ENCODE measurements at regions of chr15 and their contacts with region 1.

Region 1: DNA sequence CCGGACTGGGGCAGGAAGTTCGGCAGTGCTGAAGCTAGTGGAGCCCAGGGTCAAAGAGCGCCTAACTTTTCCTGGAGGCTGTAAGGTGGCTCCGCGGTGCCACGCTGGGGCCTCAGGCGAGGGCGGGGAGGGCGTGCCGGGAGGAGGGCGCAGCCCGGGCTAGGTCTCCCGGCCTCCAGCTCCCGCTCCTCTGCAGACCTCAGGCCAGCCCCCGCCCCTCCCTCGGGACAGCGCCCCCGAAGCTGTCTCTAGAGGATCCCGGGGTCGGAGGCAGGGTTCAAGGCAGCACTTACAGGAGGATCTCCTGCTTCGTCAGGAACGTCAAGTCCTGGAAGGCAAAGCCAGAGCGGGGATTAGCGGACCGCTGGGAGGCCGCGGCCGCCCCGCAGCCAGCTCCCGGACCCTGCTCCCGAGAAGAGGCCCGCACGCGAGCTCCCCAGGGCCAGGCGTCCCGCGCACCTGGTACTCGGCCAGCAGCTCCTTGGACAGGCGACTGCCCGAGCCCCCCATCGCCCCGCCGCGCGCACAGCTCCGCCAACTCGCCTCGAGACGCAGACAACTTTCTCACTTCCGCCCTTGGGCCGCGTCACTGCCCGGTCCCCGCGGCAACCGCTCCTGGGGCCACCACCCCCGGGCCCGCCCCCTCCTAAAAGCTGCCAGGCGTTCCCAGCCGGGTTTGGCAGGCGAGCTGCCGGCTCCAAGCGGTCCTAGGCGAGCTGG is at the start of gene CIB1:
- DNase-seq: peak; percentile 97
- ATAC-seq: peak; percentile 87
- H3K4me3 Mint-ChIP-seq: peak within 1 kb of the TSS; percentile 99
- H3K27ac Mint-ChIP-seq: peak within 1 kb of the TSS; percentile 94
- H3K4me1 Mint-ChIP-seq: peaks cover 45% of the 10 kb centered on the region
- H3K27me3 Mint-ChIP-seq: no peaks in the 10 kb centered on the region
- CTCF ChIP-seq: no peak
- total RNA-seq, gene CIB1: 151 to 154 TPM

Region 2: DNA sequence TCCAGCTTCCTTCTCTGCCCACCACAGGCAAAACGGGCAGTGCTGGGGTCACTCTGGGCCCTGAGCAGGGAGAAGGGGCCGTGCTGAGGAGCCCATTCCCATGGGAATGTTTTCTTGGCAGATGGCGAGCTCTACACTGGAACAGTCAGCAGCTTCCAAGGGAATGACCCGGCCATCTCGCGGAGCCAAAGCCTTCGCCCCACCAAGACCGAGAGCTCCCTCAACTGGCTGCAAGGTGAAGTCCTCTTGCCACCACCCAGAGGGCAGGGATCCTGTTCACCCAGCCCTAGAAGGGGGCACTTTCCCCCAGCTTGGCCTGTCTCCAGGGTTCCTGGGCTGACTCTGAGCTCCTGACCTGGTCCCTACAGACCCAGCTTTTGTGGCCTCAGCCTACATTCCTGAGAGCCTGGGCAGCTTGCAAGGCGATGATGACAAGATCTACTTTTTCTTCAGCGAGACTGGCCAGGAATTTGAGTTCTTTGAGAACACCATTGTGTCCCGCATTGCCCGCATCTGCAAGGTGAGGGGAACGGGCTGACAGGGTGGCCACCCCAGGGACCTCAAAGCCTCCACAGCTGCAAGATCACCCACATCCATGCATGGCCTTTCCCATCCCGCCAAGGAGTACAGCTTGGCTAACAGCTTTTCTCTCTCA is 12.2 kb before region 1 on chr15:
- CTCF ChIA-PET with region 1: interaction called, 24 read pairs
- POLR2A ChIA-PET with region 1: interaction called, 3 read pairs
- intact Hi-C with region 1: no loop called
- DNase-seq: peak; percentile 47
- ATAC-seq: peak; percentile 61
- H3K4me3 Mint-ChIP-seq: no peak overlapping the region
- H3K27ac Mint-ChIP-seq: no peak overlapping the region
- H3K4me1 Mint-ChIP-seq: peaks cover 8% of the 10 kb centered on the region
- H3K27me3 Mint-ChIP-seq: no peaks in the 10 kb centered on the region
- CTCF ChIP-seq: peak; percentile 41

Region 3: DNA sequence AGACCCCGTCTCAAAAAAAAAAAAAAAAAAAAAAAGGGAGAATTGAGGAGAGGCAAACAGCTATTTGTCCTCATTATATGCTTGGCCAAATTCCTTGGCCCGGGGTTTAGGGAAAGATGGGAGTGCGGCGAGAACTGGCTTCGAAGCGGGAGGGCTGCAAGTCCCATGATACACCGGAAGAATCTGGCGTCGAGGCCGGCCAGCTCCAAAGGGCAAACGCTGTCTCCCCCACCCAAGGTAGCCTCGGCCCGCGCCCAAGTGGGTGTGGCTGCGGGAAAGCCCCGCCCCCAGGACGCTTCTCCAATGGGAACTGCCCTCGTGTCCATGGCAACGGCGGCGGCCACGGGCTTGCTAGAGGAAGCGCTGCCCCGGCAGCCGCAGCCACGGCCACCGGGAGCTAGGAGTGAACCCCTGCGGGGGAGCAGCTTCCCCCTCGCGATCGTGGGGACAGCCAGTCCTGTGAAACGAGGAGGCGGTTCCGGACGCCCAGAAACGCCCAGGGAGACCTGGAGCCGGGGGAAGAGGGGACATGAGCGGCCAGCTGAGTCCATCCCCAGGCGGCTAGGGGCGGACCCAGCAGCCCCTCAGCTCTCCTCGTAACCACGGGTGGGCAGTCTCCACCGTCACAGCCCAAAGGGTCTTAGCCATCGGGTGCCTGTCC is 15.8 kb after region 1 on chr15 and contains the start of gene TTLL13:
- CTCF ChIA-PET with region 1: interaction called, 5 read pairs
- POLR2A ChIA-PET with region 1: interaction called, 13 read pairs
- intact Hi-C with region 1: no loop called
- DNase-seq: peak; percentile 79
- ATAC-seq: peak; percentile 71
- H3K4me3 Mint-ChIP-seq: peak within 1 kb of the TSS; percentile 54
- H3K27ac Mint-ChIP-seq: no peak within 1 kb of the TSS
- H3K4me1 Mint-ChIP-seq: peaks cover 16% of the 10 kb centered on the region
- H3K27me3 Mint-ChIP-seq: peaks cover 2% of the 10 kb centered on the region
- CTCF ChIP-seq: no peak
- total RNA-seq, gene TTLL13: 0.20 to 1.1 TPM

Region 4: GRCh38 chr15:90265271-90266060 is 31.9 kb after region 1 on chr15 and contains the start of gene NGRN:
- CTCF ChIA-PET with region 1: no interaction called
- POLR2A ChIA-PET with region 1: interaction called, 9 read pairs
- intact Hi-C with region 1: loop called (anchors 5 kb)
- DNase-seq: peak; percentile 96
- ATAC-seq: peak; percentile 89
- H3K4me3 Mint-ChIP-seq: peak within 1 kb of the TSS; percentile 85
- H3K27ac Mint-ChIP-seq: peak within 1 kb of the TSS; percentile 99
- H3K4me1 Mint-ChIP-seq: peaks cover 32% of the 10 kb centered on the region
- H3K27me3 Mint-ChIP-seq: no peaks in the 10 kb centered on the region
- CTCF ChIP-seq: no peak
- total RNA-seq, gene NGRN: 22.2 to 23.1 TPM

Measured in activated CD8-positive, alpha-beta T cell treated with anti-CD3 and anti-CD28 coated beads for 36 hours (primary cell).